CD8-positive, alpha-beta T cell (primary cell): ENCODE measurements at regions of chr1 and their contacts with region 1.

Region 1: DNA sequence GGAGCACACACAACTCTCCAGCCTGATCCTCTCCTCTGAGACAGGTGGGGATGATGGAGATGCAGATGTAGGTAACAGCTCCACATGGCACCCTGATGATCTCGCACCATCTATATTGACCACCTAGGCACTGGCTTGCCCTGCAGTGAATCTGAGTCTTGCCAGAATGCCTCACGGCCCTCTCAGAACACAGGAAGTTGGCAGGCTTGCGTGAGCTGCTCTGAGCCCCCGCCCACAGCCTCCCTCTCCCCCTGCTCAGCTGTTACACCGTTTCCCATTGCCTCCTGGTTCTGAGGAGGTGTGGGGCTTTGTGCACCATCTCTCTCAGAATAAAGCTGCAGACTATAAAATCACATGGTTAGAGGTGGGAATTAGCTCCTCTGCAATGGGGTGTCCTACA is 48.0 kb downstream of the URB2 start:
- DNase-seq: peak in 1 of 9 experiments; percentile 14
- ATAC-seq: no peak
- H3K4me3 ChIP-seq: no peak overlapping the region
- H3K4me3 Mint-ChIP-seq: no peak overlapping the region
- H3K27ac ChIP-seq: no peak overlapping the region
- H3K27ac Mint-ChIP-seq: no peak overlapping the region
- H3K4me1 ChIP-seq: peaks cover 7% of the 10 kb centered on the region
- H3K4me1 Mint-ChIP-seq: peaks cover 14% of the 10 kb centered on the region
- H3K27me3 ChIP-seq: peaks cover 0 to 3% of the 10 kb centered on the region in 2 experiments
- H3K27me3 Mint-ChIP-seq: no peaks in the 10 kb centered on the region
- CTCF ChIP-seq: no peak

Region 2: DNA sequence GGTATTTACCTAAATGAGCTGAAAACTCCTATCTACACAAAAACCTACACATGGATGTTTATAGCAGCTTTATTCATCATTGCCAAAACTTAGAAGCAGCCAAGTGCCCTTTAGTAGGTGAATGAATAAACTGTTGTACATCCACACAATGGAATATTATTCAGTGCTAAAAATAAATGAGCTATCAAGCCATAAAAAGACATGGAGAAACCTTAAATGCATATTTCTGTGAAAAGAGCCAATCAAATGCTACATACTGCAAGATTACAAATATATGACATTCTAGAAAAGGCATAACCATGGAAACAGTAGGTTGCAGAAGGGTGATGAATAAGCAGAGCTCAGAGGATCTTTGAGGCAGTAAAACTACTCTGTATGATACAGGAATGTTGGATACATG is 138.8 kb before region 1 on chr1:
- CTCF ChIA-PET with region 1: no interaction called
- POLR2A ChIA-PET with region 1: no interaction called
- intact Hi-C with region 1: no loop called
- DNase-seq: no peak
- ATAC-seq: no peak
- H3K4me3 ChIP-seq: no peak overlapping the region
- H3K4me3 Mint-ChIP-seq: no peak overlapping the region
- H3K27ac ChIP-seq: no peak overlapping the region
- H3K27ac Mint-ChIP-seq: no peak overlapping the region
- H3K4me1 ChIP-seq: no peaks in the 10 kb centered on the region
- H3K4me1 Mint-ChIP-seq: no peaks in the 10 kb centered on the region
- H3K27me3 ChIP-seq: no peaks in the 10 kb centered on the region
- H3K27me3 Mint-ChIP-seq: no peaks in the 10 kb centered on the region
- CTCF ChIP-seq: no peak

Region 3: GRCh38 chr1:229685149-229685548 is 11.1 kb after region 1 on chr1:
- CTCF ChIA-PET with region 1: interaction called, 3 read pairs
- POLR2A ChIA-PET with region 1: interaction called, 6 read pairs
- intact Hi-C with region 1: loop called (anchors 1 kb)
- DNase-seq: no peak
- ATAC-seq: no peak
- H3K4me3 ChIP-seq: no peak overlapping the region
- H3K4me3 Mint-ChIP-seq: no peak overlapping the region
- H3K27ac ChIP-seq: no peak overlapping the region
- H3K27ac Mint-ChIP-seq: no peak overlapping the region
- H3K4me1 ChIP-seq: no peaks in the 10 kb centered on the region
- H3K4me1 Mint-ChIP-seq: peaks cover 5% of the 10 kb centered on the region
- H3K27me3 ChIP-seq: no peaks in the 10 kb centered on the region
- H3K27me3 Mint-ChIP-seq: no peaks in the 10 kb centered on the region
- CTCF ChIP-seq: no peak